ENCODE measurements at regions of chr20 and their contacts with region 1.

Region 1: DNA sequence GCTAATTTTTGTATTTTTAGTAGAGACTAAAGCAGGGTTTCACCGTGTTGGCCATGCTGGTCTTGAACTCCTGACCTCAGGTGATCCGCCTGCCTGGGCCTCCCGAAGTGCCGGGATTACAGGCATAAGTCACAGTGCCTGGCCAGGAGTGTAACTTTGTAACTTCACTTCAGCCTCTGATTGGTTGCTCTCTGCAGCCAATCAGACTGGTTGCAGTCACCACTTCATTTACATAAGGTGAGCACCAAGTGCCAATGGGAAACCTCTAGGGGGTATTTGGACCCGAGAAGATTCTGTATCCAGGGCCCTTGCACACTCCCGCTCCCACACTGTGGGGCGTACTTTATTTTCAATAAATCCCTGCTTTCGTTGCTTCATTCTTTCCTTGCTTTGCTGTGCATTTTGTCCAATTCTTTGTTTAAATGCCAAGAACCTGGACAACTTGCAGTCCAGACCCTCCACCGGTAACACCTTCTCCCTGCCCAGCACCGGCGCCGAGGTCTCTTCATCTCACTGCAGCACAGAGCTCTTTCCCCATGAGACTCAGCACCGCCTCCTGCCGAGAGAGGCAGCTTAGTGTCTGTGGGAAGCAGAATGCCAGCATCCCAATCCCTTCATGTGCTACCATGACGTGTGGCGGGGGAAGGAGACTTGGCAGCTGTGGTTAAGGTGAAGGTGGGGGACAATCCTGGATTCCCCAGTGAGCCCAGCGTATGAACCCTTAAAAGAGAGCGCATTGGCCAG is 14.0 kb upstream of the MRGBP start:
- DNase-seq: peak; percentile 49
- H3K4me3 ChIP-seq: no peak overlapping the region
- H3K27ac ChIP-seq: no peak overlapping the region
- H3K4me1 ChIP-seq: peaks cover 12% of the 10 kb centered on the region
- H3K27me3 ChIP-seq: no peaks in the 10 kb centered on the region
- CTCF ChIP-seq: no peak
- POLR2A ChIP-seq: no peak

Region 2: GRCh38 chr20:62500237-62500864 is 282.0 kb before region 1 on chr20:
- intact Hi-C with region 1: loop called (anchors 10 kb)
- DNase-seq: peak; percentile 80
- H3K4me3 ChIP-seq: no peak overlapping the region
- H3K27ac ChIP-seq: no peak overlapping the region
- H3K4me1 ChIP-seq: peaks cover 18% of the 10 kb centered on the region
- H3K27me3 ChIP-seq: no peaks in the 10 kb centered on the region
- CTCF ChIP-seq: peak; percentile 90 to 95 (median 93)
- POLR2A ChIP-seq: no peak

Region 3: GRCh38 chr20:62668441-62669027 is 113.8 kb before region 1 on chr20:
- intact Hi-C with region 1: loop called (anchors 10 kb)
- DNase-seq: peak; percentile 87
- H3K4me3 ChIP-seq: no peak overlapping the region
- H3K27ac ChIP-seq: no peak overlapping the region
- H3K4me1 ChIP-seq: peaks cover 19% of the 10 kb centered on the region
- H3K27me3 ChIP-seq: no peaks in the 10 kb centered on the region
- CTCF ChIP-seq: peak; percentile 83 to 93 (median 87)
- POLR2A ChIP-seq: no peak

Region 4: GRCh38 chr20:62846188-62846890 is 64.0 kb after region 1 on chr20:
- intact Hi-C with region 1: no loop called
- DNase-seq: no peak
- H3K4me3 ChIP-seq: no peak overlapping the region
- H3K27ac ChIP-seq: no peak overlapping the region
- H3K4me1 ChIP-seq: peaks cover 4% of the 10 kb centered on the region
- H3K27me3 ChIP-seq: no peaks in the 10 kb centered on the region
- CTCF ChIP-seq: no peak
- POLR2A ChIP-seq: no peak

Measured in testis (tissue), 5 donors.